WTC11 (cell line): ENCODE measurements at regions of chr19 and their contacts with region 1.

Region 1: DNA sequence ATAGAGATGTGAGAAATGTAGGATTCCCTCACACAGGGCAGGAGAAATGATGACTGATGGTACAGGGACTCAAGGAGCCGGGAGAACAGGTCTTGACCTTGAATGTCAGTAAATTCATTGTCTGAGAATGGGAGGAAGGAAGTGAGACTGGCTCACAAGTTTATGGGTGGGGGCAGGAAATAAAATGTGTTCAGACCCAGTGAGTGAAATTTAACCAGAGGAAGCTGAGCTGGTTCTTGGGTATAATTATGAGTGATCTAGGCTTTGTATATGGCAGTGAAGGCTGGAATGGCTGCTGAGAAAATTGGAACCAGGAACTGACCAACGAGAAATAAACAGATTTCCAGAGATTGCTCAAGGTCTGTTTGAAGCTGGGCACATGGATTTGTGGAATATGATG is 6.3 kb upstream of the IGSF23 start:
- DNase-seq: no peak
- ATAC-seq: no peak
- H3K4me3 Mint-ChIP-seq: no peak overlapping the region
- H3K27ac Mint-ChIP-seq: no peak overlapping the region
- H3K4me1 Mint-ChIP-seq: peaks cover 51% of the 10 kb centered on the region
- H3K27me3 Mint-ChIP-seq: no peaks in the 10 kb centered on the region; the same call in 1 of the 2 replicates
- CTCF ChIP-seq: no peak

Region 2: GRCh38 chr19:43438291-43439096 is 1168.6 kb before region 1 on chr19:
- CTCF ChIA-PET with region 1: no interaction called
- POLR2A ChIA-PET with region 1: no interaction called
- DNase-seq: no peak
- ATAC-seq: no peak
- H3K4me3 Mint-ChIP-seq: no peak overlapping the region
- H3K27ac Mint-ChIP-seq: no peak overlapping the region
- H3K4me1 Mint-ChIP-seq: peaks cover 4% of the 10 kb centered on the region; the same call in 1 of the 2 replicates
- H3K27me3 Mint-ChIP-seq: peaks cover 3% of the 10 kb centered on the region; the same call in 1 of the 2 replicates
- CTCF ChIP-seq: no peak

Region 3: GRCh38 chr19:44557933-44558332 is 49.1 kb before region 1 on chr19:
- CTCF ChIA-PET with region 1: no interaction called
- POLR2A ChIA-PET with region 1: no interaction called
- DNase-seq: no peak
- ATAC-seq: no peak
- H3K4me3 Mint-ChIP-seq: no peak overlapping the region
- H3K27ac Mint-ChIP-seq: no peak overlapping the region
- H3K4me1 Mint-ChIP-seq: no peaks in the 10 kb centered on the region
- H3K27me3 Mint-ChIP-seq: peaks cover 7% of the 10 kb centered on the region
- CTCF ChIP-seq: no peak

Region 4: GRCh38 chr19:44576843-44577565 is 30.0 kb before region 1 on chr19:
- CTCF ChIA-PET with region 1: interaction called, 20 read pairs
- POLR2A ChIA-PET with region 1: no interaction called
- DNase-seq: peak; percentile 64
- ATAC-seq: peak; percentile 94
- H3K4me3 Mint-ChIP-seq: no peak overlapping the region
- H3K27ac Mint-ChIP-seq: no peak overlapping the region
- H3K4me1 Mint-ChIP-seq: peaks cover 16% of the 10 kb centered on the region
- H3K27me3 Mint-ChIP-seq: peaks cover 3% of the 10 kb centered on the region
- CTCF ChIP-seq: peak; percentile 28

Region 5: GRCh38 chr19:44582581-44583265 is 24.3 kb before region 1 on chr19:
- CTCF ChIA-PET with region 1: interaction called, 30 read pairs
- POLR2A ChIA-PET with region 1: no interaction called
- DNase-seq: peak; percentile 86
- ATAC-seq: peak; percentile 93
- H3K4me3 Mint-ChIP-seq: no peak overlapping the region
- H3K27ac Mint-ChIP-seq: no peak overlapping the region
- H3K4me1 Mint-ChIP-seq: peaks cover 3% of the 10 kb centered on the region
- H3K27me3 Mint-ChIP-seq: peaks cover 15% of the 10 kb centered on the region
- CTCF ChIP-seq: peak; percentile 85

Region 6: DNA sequence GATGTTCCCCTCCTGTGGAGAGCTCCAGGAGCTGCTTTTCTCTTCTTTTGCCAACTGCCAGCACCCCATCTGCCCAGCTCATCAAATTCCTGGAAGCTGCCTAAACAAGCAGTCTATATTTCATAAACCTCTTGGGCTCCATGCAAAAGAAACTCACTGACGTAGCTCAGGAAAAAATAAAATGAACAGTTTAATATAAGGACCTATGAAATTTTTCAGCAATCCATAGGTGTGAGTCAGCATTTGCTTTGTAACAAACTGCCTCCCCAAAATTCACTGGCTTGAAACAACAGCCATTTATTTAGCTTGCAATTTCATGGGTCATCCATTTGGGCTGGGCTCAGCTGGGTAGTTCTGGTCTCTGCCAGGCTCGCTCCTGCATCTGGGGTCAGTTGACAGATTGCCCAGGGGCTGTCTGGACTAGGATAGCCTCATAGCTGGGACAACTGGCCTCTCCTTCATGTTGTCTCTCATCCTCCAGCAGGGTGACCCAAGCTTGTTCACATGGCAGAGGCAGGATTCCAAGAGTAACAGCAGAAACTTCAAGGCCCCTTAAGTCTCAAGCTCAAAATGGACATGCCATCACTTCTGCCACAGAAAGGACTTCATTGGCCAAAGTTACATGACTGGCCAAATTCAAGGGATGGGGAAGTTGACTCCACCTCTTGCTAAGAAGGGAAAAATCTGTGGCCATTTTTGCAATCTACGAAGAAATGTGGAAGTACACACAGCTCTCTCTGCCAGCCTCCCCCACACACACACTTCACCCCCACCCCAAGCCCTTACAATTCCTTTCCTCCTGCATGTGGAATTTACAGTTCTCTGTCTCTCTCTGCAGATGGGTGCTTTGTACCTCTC is 28.8 kb after region 1 on chr19:
- CTCF ChIA-PET with region 1: interaction called, 11 read pairs
- POLR2A ChIA-PET with region 1: no interaction called
- DNase-seq: no peak
- ATAC-seq: no peak
- H3K4me3 Mint-ChIP-seq: no peak overlapping the region
- H3K27ac Mint-ChIP-seq: no peak overlapping the region
- H3K4me1 Mint-ChIP-seq: peaks cover 20% of the 10 kb centered on the region
- H3K27me3 Mint-ChIP-seq: peaks cover 10% of the 10 kb centered on the region; the same call in 1 of the 2 replicates
- CTCF ChIP-seq: no peak

Region 7: GRCh38 chr19:44643605-44644401 is 36.8 kb after region 1 on chr19 and contains the start of gene PVR:
- CTCF ChIA-PET with region 1: interaction called, 22 read pairs
- POLR2A ChIA-PET with region 1: no interaction called
- DNase-seq: peak; percentile 61
- ATAC-seq: peak; percentile 82
- H3K4me3 Mint-ChIP-seq: peak within 1 kb of the TSS; percentile 87
- H3K27ac Mint-ChIP-seq: no peak within 1 kb of the TSS
- H3K4me1 Mint-ChIP-seq: no peaks in the 10 kb centered on the region
- H3K27me3 Mint-ChIP-seq: peaks cover 24% of the 10 kb centered on the region
- CTCF ChIP-seq: no peak
- total RNA-seq, gene PVR: 13.7 to 15.9 TPM (median 15.0 TPM) in 3 replicates

Region 8: GRCh38 chr19:44653977-44654774 is 47.1 kb after region 1 on chr19:
- CTCF ChIA-PET with region 1: interaction called, 40 read pairs
- POLR2A ChIA-PET with region 1: no interaction called
- DNase-seq: peak; percentile 83
- ATAC-seq: peak; percentile 47
- H3K4me3 Mint-ChIP-seq: no peak overlapping the region
- H3K27ac Mint-ChIP-seq: no peak overlapping the region
- H3K4me1 Mint-ChIP-seq: no peaks in the 10 kb centered on the region
- H3K27me3 Mint-ChIP-seq: no peaks in the 10 kb centered on the region
- CTCF ChIP-seq: no peak